Breast epithelium (tissue), 4 donors: ENCODE measurements at regions of chr22 and their contacts with region 1.

Region 1: GRCh38 chr22:23119494-23120414 is 22.0 kb downstream of the RSPH14 start:
- DNase-seq: no peak
- H3K4me3 ChIP-seq: no peak overlapping the region
- H3K27ac ChIP-seq: peak overlapping the region in 1 of 2 donors; percentile 32
- H3K4me1 ChIP-seq: no peaks in the 10 kb centered on the region
- H3K27me3 ChIP-seq: no peaks in the 10 kb centered on the region
- CTCF ChIP-seq: no peak
- POLR2A ChIP-seq: no peak

Region 2: DNA sequence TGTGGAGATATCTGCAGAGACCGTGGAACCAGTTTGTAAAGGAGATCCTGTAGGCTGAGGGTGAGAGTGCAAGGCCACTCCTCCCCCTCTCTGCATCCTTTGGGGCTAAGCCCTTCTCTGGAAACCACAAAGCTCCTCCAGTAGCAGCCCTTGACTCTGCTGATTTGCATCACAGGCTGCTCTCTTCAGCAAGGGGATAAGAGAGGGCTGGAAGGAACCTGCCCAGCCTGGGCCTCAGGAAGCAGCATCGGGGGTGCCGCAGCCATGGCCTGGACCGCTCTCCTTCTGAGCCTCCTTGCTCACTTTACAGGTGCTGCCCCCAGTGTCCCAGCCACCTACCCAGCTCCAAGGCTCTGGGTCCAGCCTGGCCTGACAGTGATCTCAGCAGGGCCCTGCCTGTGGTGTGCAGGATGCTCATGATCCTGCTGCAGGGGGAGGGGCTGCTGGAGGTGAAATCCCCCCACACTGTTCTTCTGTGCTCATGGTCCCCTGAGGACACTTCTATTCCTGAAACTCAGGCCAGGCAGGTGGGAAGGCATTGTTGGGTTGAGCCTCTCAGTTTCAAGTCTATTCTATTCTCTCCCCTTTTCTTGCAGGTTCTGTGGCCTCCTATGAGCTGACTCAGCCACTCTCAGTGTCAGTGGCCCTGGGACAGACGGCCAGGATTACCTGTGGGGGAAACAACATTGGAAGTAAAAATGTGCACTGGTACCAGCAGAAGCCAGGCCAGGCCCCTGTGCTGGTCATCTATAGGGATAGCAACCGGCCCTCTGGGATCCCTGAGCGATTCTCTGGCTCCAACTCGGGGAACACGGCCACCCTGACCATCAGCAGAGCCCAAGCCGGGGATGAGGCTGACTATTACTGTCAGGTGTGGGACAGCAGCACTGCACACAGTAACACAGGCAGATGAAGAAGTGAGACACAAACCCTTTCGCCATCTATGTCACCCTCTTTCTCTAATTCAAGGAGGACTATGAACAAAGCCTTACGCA is 300.6 kb before region 1 on chr22:
- intact Hi-C with region 1: no loop called
- DNase-seq: no peak
- H3K4me3 ChIP-seq: no peak overlapping the region
- H3K27ac ChIP-seq: no peak overlapping the region
- H3K4me1 ChIP-seq: no peaks in the 10 kb centered on the region
- H3K27me3 ChIP-seq: peaks cover 0 to 3% of the 10 kb centered on the region in 2 donors
- CTCF ChIP-seq: no peak
- POLR2A ChIP-seq: no peak

Region 3: DNA sequence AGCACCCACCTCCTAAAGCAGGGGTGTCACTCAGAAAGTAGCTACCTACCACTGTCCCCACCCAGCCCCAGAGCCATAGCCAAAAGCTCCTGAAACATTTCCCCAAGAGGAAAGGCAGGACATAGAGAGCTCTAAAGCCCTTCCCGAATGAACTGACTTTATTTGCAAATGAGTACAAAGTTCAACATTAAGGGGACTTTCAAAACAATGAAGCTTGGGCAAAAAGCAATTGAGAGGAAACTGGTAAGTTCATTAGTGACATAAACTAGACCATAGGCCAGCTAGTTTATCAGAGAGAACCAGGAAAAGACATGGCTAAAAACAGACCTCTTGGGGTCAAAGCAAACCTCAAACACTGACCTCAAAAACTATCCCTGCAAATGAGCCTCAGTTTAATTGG is 159.4 kb before region 1 on chr22:
- intact Hi-C with region 1: loop called (anchors 5 kb)
- DNase-seq: no peak
- H3K4me3 ChIP-seq: no peak overlapping the region
- H3K27ac ChIP-seq: peak overlapping the region in 1 of 2 donors; percentile 62
- H3K4me1 ChIP-seq: no peaks in the 10 kb centered on the region
- H3K27me3 ChIP-seq: peaks cover 0 to 3% of the 10 kb centered on the region in 2 donors
- CTCF ChIP-seq: no peak
- POLR2A ChIP-seq: no peak

Region 4: GRCh38 chr22:24532103-24532520 is 1412.4 kb after region 1 on chr22:
- intact Hi-C with region 1: no loop called
- DNase-seq: no peak
- H3K4me3 ChIP-seq: no peak overlapping the region
- H3K27ac ChIP-seq: no peak overlapping the region
- H3K4me1 ChIP-seq: no peaks in the 10 kb centered on the region
- H3K27me3 ChIP-seq: no peaks in the 10 kb centered on the region
- CTCF ChIP-seq: no peak
- POLR2A ChIP-seq: no peak